AG04450 (cell line): ENCODE measurements at regions of chr11 and their contacts with region 1.

Region 1: GRCh38 chr11:62601394-62602140 is at the start of gene MTA2:
- DNase-seq: peak; percentile 96
- H3K4me3 ChIP-seq: peak within 1 kb of the TSS; percentile 80
- H3K27ac ChIP-seq: peak within 1 kb of the TSS; percentile 78
- H3K27me3 ChIP-seq: no peaks in the 10 kb centered on the region
- CTCF ChIP-seq: no peak
- polyA plus RNA-seq, gene MTA2: 22.9 and 36.7 TPM in 2 replicates

Region 2: DNA sequence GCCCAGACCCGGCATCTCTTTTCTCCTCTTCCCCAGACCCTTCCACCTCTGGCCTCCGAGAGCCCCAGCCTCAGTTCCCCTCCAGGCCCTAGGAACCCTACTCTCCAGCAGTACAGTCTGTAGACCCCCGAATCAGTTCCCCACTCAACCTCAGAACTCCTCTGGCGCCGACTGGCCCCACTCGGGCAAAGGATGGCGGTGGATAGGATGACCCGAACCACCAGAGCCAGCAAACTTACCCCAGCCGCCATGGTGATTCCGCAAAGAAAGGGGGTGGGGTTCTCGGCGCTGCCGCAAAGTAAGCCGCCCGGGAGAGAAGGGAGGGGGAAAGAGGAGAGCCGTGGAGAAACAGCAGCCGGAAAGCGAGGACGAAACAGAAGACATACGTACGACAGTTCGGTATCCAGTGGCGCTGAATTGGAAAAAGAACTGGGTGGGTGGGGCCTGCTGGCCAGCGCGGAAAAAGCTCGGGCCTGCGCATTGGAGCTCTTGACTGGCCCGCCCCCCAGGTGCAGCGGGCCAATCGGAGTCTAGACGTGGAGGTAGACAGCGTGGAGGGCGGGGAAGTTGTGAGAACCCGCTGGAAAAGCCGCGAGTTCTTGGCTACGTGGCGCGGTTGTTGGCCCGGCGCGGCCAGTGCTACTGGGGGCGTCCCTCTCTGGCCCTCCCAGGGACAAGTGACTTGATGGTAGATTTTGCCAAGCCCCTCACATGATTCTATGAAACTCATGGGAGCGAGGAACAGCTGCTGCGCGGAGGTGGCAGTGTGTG is 27.8 kb before region 1 on chr11 and contains the start of gene EEF1G:
- CTCF ChIA-PET with region 1: interaction called, 3 read pairs
- POLR2A ChIA-PET with region 1: interaction called, 15 read pairs
- DNase-seq: peak; percentile 100
- H3K4me3 ChIP-seq: peak within 1 kb of the TSS; percentile 92
- H3K27ac ChIP-seq: peak within 1 kb of the TSS; percentile 98
- H3K27me3 ChIP-seq: no peaks in the 10 kb centered on the region
- CTCF ChIP-seq: no peak
- polyA plus RNA-seq, gene EEF1G: 2,186 and 2,474 TPM in 2 replicates

Region 3: GRCh38 chr11:62621567-62622470 is 20.3 kb after region 1 on chr11 and contains the start of gene B3GAT3:
- CTCF ChIA-PET with region 1: interaction called, 7 read pairs
- POLR2A ChIA-PET with region 1: interaction called, 13 read pairs
- DNase-seq: peak; percentile 96
- H3K4me3 ChIP-seq: peak within 1 kb of the TSS; percentile 86
- H3K27ac ChIP-seq: peak within 1 kb of the TSS; percentile 97
- H3K27me3 ChIP-seq: no peaks in the 10 kb centered on the region
- CTCF ChIP-seq: peak; percentile 13; the same call in 1 of the 2 replicates
- polyA plus RNA-seq, gene B3GAT3: 14.5 and 20.2 TPM in 2 replicates

Region 4: GRCh38 chr11:62678770-62679696 is 77.5 kb after region 1 on chr11 and contains the start of gene UBXN1:
- CTCF ChIA-PET with region 1: no interaction called
- POLR2A ChIA-PET with region 1: interaction called, 10 read pairs
- DNase-seq: peak; percentile 66
- H3K4me3 ChIP-seq: peak within 1 kb of the TSS; percentile 98
- H3K27ac ChIP-seq: peak within 1 kb of the TSS; percentile 80
- H3K27me3 ChIP-seq: no peaks in the 10 kb centered on the region
- CTCF ChIP-seq: no peak
- polyA plus RNA-seq, gene UBXN1: 92.8 and 100 TPM in 2 replicates